ENCODE measurements at regions of chr2 and their contacts with region 1.

Region 1: GRCh38 chr2:5188636-5189035 is 503.5 kb upstream of the SOX11 start:
- DNase-seq: no peak

Region 2: DNA sequence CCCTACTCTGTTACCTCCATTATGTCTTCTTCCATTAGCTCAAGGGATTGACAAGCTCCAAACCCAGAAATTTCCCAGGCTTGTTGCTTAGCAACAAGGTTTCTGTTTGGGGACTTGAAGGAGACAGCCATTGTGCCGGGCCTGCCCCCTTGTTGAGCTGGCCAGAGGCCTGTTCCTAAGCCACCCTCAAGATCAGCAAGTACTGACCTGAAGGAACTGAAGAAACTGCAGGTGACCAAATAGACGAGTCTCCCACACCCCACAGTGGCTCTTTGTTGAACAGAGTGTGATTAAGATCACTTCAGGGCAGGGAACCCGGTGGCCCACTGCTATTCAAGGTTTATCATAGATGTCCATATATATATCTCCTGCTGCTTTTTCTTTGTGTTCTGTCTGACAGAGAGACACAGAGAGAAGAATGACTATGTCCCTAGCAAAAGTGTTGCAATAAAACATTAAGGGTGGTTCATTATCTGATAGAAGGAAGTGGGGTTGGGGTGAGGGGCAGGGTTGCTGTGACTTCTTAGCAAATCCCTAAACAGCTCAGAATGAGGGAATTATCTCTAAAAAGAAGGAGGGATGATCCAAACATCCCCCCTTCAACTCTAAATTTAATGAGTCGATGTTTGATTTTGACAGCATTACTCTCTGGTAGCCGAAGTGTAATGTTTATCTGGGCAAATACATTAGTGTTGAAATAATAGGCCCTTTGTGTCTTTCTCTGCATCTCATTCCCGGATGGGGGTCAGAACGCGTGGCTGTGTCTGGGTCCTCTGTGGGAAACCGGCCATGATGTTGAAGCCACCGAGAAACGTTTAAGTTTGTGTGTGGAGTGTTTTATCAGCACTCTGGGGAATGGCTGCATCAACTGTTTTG is 1797.9 kb after region 1 on chr2:
- intact Hi-C with region 1: loop called in 1 of 2 experiments (anchors 5 kb)
- DNase-seq: no peak